B cell (primary cell): ENCODE measurements at regions of chr15 and their contacts with region 1.

Region 1: DNA sequence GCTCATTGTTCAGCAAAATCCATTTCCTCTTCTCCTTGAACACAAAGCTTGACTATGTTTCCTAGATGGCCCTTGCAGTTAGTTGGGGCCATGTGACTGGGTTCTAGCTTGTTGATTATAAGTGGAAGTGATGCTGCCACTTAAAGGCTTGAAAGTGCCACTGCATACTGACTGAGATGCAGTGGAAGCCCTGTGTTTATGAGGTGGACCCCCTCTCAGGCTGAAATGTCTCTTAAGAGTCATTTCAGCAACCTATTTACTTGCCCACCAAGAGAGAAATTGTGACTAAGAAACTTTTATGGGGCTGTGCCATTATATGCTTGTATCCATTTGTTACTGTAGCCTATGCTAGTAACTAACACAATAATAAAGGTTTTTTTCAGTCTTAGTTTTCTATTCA is 8.4 kb upstream of the ANP32A start:
- DNase-seq: peak; percentile 61
- ATAC-seq: peak; percentile 64
- H3K4me3 ChIP-seq: no peak overlapping the region
- H3K4me3 Mint-ChIP-seq: no peak overlapping the region
- H3K27ac ChIP-seq: no peak overlapping the region
- H3K27ac Mint-ChIP-seq: no peak overlapping the region
- H3K4me1 ChIP-seq: no peaks in the 10 kb centered on the region
- H3K4me1 Mint-ChIP-seq: no peaks in the 10 kb centered on the region
- H3K27me3 ChIP-seq: peaks cover 0 to 6% (median under 1%) of the 10 kb centered on the region in 4 experiments
- H3K27me3 Mint-ChIP-seq: peaks cover 12% of the 10 kb centered on the region
- CTCF ChIP-seq: peak; percentile 75

Region 2: GRCh38 chr15:68526269-68526668 is 302.8 kb before region 1 on chr15:
- CTCF ChIA-PET with region 1: no interaction called
- POLR2A ChIA-PET with region 1: no interaction called
- intact Hi-C with region 1: no loop called
- DNase-seq: no peak
- ATAC-seq: no peak
- H3K4me3 ChIP-seq: no peak overlapping the region
- H3K4me3 Mint-ChIP-seq: no peak overlapping the region
- H3K27ac ChIP-seq: no peak overlapping the region
- H3K27ac Mint-ChIP-seq: no peak overlapping the region
- H3K4me1 ChIP-seq: peaks cover 2 to 11% of the 10 kb centered on the region in 2 donors
- H3K4me1 Mint-ChIP-seq: peaks cover 12% of the 10 kb centered on the region
- H3K27me3 ChIP-seq: peaks cover 0 to 10% (median 2%) of the 10 kb centered on the region in 4 experiments
- H3K27me3 Mint-ChIP-seq: peaks cover 16% of the 10 kb centered on the region
- CTCF ChIP-seq: no peak

Region 3: GRCh38 chr15:68550481-68551295 is 278.4 kb before region 1 on chr15:
- CTCF ChIA-PET with region 1: interaction called, 13 read pairs
- POLR2A ChIA-PET with region 1: no interaction called
- intact Hi-C with region 1: loop called (anchors 2 kb)
- DNase-seq: peak; percentile 80
- ATAC-seq: peak; percentile 58
- H3K4me3 ChIP-seq: no peak overlapping the region
- H3K4me3 Mint-ChIP-seq: no peak overlapping the region
- H3K27ac ChIP-seq: no peak overlapping the region
- H3K27ac Mint-ChIP-seq: no peak overlapping the region
- H3K4me1 ChIP-seq: no peaks in the 10 kb centered on the region
- H3K4me1 Mint-ChIP-seq: no peaks in the 10 kb centered on the region
- H3K27me3 ChIP-seq: peaks cover 0 to 25% (median 12%) of the 10 kb centered on the region in 4 experiments
- H3K27me3 Mint-ChIP-seq: peaks cover 46% of the 10 kb centered on the region
- CTCF ChIP-seq: peak; percentile 92

Region 4: DNA sequence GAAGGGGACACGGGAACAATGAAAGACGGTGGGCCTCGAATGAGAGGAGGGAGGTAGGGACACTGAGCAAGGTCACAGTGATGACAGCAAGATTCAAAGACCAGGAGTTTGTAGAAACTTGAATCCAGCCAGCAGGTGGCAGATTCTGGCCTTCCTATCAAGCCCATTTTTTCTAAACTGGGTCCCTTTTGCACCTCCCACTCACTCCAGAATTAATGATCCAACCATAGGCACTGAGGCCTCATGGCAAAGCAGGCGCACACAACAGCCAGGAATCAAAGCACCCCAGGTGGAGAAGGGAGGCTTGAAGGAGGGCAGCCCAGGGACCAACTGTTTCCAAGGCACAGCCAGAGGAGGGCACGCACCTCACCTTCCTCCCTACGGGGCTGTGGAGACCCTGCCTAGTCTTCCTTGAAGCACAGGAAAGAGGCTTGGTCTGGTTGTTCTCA is 98.6 kb before region 1 on chr15:
- CTCF ChIA-PET with region 1: interaction called, 13 read pairs
- POLR2A ChIA-PET with region 1: no interaction called
- intact Hi-C with region 1: loop called (anchors 1 kb)
- DNase-seq: peak; percentile 51
- ATAC-seq: no peak
- H3K4me3 ChIP-seq: no peak overlapping the region
- H3K4me3 Mint-ChIP-seq: no peak overlapping the region
- H3K27ac ChIP-seq: no peak overlapping the region
- H3K27ac Mint-ChIP-seq: no peak overlapping the region
- H3K4me1 ChIP-seq: peaks cover 15 to 23% of the 10 kb centered on the region in 2 donors
- H3K4me1 Mint-ChIP-seq: peaks cover 21% of the 10 kb centered on the region
- H3K27me3 ChIP-seq: peaks cover 0 to 2% (median 0%) of the 10 kb centered on the region in 4 experiments
- H3K27me3 Mint-ChIP-seq: peaks cover 4% of the 10 kb centered on the region
- CTCF ChIP-seq: peak; percentile 58

Region 5: GRCh38 chr15:68789534-68790241 is 39.4 kb before region 1 on chr15:
- CTCF ChIA-PET with region 1: interaction called, 107 read pairs
- POLR2A ChIA-PET with region 1: no interaction called
- intact Hi-C with region 1: no loop called
- DNase-seq: no peak
- ATAC-seq: no peak
- H3K4me3 ChIP-seq: no peak overlapping the region
- H3K4me3 Mint-ChIP-seq: no peak overlapping the region
- H3K27ac ChIP-seq: peak overlapping the region in 1 of 2 donors; percentile 91
- H3K27ac Mint-ChIP-seq: peak overlapping the region; percentile 85
- H3K4me1 ChIP-seq: peaks cover 64 to 70% of the 10 kb centered on the region in 2 donors
- H3K4me1 Mint-ChIP-seq: peaks cover 67% of the 10 kb centered on the region
- H3K27me3 ChIP-seq: no peaks in the 10 kb centered on the region
- H3K27me3 Mint-ChIP-seq: no peaks in the 10 kb centered on the region
- CTCF ChIP-seq: no peak

Region 6: GRCh38 chr15:68875377-68876116 is 46.5 kb after region 1 on chr15:
- CTCF ChIA-PET with region 1: interaction called, 15 read pairs
- POLR2A ChIA-PET with region 1: no interaction called
- intact Hi-C with region 1: loop called (anchors 10 kb)
- DNase-seq: peak; percentile 90
- ATAC-seq: peak; percentile 75
- H3K4me3 ChIP-seq: no peak overlapping the region
- H3K4me3 Mint-ChIP-seq: peak overlapping the region; percentile 50
- H3K27ac ChIP-seq: no peak overlapping the region
- H3K27ac Mint-ChIP-seq: no peak overlapping the region
- H3K4me1 ChIP-seq: peaks cover 4% of the 10 kb centered on the region in 2 donors
- H3K4me1 Mint-ChIP-seq: peaks cover 3% of the 10 kb centered on the region
- H3K27me3 ChIP-seq: peaks cover 0 to 16% (median 8%) of the 10 kb centered on the region in 4 experiments
- H3K27me3 Mint-ChIP-seq: peaks cover 19% of the 10 kb centered on the region
- CTCF ChIP-seq: peak; percentile 85